Activated CD4-positive, alpha-beta T cell treated with anti-CD3 and anti-CD28 coated beads for 36 hours (primary cell): ENCODE measurements at regions of chr9 and their contacts with region 1.

Region 1: DNA sequence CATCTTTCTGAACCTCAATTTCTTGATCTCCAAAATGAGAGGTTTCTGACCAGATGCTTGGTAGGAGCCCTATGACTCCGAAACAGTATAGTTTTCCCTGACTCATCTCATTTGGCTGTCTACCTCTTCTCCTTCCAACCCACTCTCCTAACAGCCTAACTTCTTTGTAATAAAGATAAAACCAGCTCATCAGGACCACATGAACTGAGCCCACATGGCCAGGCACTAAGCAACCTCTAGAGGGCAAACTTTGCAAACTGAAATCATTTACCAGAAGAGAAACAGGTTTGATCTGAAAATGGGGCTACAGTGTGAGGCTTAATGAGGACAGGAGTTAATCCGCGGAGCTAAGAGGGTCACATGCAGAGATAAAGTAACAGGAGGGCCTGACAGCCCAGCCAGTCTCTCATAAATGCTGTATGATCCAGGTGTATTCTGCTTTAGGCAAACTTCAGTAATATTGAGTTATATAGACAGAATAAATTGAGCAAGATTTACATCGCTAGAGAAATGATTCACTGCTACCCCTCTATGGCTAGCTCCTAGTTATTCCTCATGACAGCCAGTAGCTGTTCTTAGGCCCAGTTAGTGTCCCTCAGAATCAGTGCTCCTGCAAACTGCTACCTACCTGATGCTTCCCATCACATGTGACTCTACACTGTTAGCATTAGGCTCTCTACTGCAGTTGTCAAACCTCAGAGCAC is 64.6 kb downstream of the ABCA1 start:
- DNase-seq: peak; percentile 62
- ATAC-seq: peak; percentile 94
- H3K4me3 Mint-ChIP-seq: no peak overlapping the region
- H3K27ac Mint-ChIP-seq: no peak overlapping the region
- H3K4me1 Mint-ChIP-seq: peaks cover 7% of the 10 kb centered on the region
- H3K27me3 Mint-ChIP-seq: no peaks in the 10 kb centered on the region

Region 2: DNA sequence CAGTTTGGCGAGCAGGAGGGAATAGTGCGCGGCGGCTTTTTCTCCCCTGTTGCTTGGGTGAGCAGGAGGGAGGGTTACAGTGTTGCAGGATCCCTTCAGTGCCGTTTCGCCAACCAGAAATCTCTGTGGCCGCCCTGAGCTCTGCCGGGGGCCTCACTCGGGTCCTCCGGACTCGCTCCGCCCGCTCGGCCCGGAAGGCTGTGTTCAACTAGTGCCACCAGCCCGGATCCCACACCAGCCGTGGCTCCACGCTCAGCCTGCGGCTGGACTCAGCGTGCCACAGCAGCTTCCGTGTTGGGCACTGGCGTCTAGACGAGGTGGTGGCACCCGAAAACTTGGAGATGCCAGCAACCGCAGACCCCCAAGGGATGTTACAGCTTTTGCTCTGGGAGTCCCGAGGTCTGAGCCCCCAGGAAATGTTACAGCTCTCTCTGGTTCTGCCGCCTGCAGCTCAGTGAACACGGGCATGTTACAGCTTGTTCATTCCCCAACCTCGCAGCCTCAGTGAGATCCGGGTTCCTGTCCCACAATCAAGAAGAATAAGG is 229.3 kb before region 1 on chr9:
- CTCF ChIA-PET with region 1: no interaction called
- POLR2A ChIA-PET with region 1: no interaction called
- intact Hi-C with region 1: no loop called
- DNase-seq: no peak
- ATAC-seq: no peak
- H3K4me3 Mint-ChIP-seq: no peak overlapping the region
- H3K27ac Mint-ChIP-seq: no peak overlapping the region
- H3K4me1 Mint-ChIP-seq: no peaks in the 10 kb centered on the region
- H3K27me3 Mint-ChIP-seq: peaks cover 3% of the 10 kb centered on the region

Region 3: GRCh38 chr9:104808035-104808614 is 55.2 kb before region 1 on chr9:
- CTCF ChIA-PET with region 1: no interaction called
- POLR2A ChIA-PET with region 1: no interaction called
- intact Hi-C with region 1: loop called in 1 of 2 experiments (anchors 10 kb)
- DNase-seq: peak; percentile 25
- ATAC-seq: no peak
- H3K4me3 Mint-ChIP-seq: no peak overlapping the region
- H3K27ac Mint-ChIP-seq: no peak overlapping the region
- H3K4me1 Mint-ChIP-seq: no peaks in the 10 kb centered on the region
- H3K27me3 Mint-ChIP-seq: no peaks in the 10 kb centered on the region

Region 4: DNA sequence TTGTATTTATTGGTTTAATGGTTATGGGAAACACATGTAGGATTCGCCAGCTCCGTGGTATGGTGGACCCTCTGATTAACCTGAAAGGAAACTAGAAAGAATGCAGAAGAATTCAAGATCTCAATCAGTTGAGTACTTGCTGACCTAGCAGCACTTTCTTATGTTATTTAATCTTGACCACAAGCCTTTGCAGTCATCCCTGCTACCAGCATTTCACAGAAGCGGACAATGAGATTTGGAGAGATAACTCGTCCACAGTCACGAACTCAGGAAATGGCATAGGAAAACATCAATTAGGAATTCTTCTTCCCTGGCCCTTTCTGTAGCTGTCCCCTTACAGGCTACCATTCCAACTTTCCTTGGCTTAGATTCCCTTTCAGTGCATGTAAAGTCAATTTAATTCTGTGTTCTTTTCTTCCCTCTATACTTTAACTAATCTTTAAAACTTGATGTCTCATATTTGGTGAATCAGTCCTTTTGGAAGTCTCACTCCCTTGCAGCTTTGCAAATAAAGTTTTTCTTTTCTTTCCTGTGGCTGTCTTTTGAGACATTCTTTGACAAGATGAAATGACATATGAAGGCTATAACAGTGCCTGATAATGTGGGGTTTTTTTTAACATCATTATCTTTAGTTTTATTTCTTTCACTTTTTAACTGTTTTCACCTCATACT is 379.8 kb after region 1 on chr9:
- CTCF ChIA-PET with region 1: no interaction called
- POLR2A ChIA-PET with region 1: no interaction called
- intact Hi-C with region 1: no loop called
- DNase-seq: no peak
- ATAC-seq: no peak
- H3K4me3 Mint-ChIP-seq: no peak overlapping the region
- H3K27ac Mint-ChIP-seq: no peak overlapping the region
- H3K4me1 Mint-ChIP-seq: peaks cover 22% of the 10 kb centered on the region
- H3K27me3 Mint-ChIP-seq: peaks cover 14% of the 10 kb centered on the region

Region 5: GRCh38 chr9:105557771-105558610 is 694.7 kb after region 1 on chr9 and contains the start of gene FKTN:
- CTCF ChIA-PET with region 1: no interaction called
- POLR2A ChIA-PET with region 1: no interaction called
- intact Hi-C with region 1: no loop called
- DNase-seq: peak; percentile 91
- ATAC-seq: peak; percentile 97
- H3K4me3 Mint-ChIP-seq: peak within 1 kb of the TSS; percentile 94
- H3K27ac Mint-ChIP-seq: peak within 1 kb of the TSS; percentile 85
- H3K4me1 Mint-ChIP-seq: peaks cover 18% of the 10 kb centered on the region
- H3K27me3 Mint-ChIP-seq: no peaks in the 10 kb centered on the region
- total RNA-seq, gene FKTN: 12.1 to 16.0 TPM